ENCODE measurements at regions of chr5 and their contacts with region 1.

Region 1: DNA sequence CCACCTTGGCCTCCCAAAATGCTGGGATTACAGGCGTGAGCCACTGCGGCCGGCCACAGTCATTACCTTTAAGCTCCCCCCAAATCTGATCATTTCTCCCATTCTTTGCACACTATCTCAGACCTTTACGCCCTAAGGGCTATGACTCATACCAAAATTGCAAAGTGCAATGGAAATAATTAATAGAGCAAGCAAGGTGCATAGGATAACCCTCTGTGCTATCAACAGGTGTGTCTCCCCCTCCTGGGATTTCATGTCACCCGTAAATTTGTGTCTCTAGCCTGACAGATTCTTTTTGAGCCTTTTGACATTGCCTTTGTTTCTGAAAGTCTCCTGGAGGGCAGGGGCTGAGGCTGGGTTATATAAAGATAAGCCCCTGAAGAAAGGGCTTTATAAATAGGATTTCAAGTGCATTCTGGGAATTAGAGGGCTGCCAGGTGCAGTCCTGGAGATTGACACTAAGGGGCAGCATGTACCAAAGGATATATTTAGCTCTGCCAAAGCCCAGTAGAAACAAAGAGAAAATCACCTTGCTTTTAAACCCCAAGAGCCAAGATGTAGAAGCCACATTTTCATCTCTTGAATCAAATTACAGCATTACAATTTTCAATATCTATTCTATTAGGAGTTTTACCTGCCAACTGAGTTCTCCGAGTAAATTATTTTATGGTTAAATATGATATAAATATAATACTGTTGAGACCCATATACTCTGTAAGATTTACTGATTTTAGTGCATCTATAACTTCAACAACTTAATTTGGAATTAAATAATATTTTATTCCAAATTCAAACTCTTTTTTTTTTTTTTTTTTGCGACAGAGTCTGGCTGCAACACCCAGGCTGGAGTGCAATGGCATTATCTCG is 18.2 kb downstream of the S100Z start:
- DNase-seq: peak; percentile 43 to 75
- ATAC-seq: peak; percentile 74 to 93 (median 84)
- H3K4me3 ChIP-seq: no peak overlapping the region
- H3K27ac ChIP-seq: peak overlapping the region in 4 of 10 donors; percentile 23 to 60 (median 46)
- H3K4me1 ChIP-seq: peaks cover 0 to 9% (median 0%) of the 10 kb centered on the region in 9 donors
- H3K27me3 ChIP-seq: no peaks in the 10 kb centered on the region
- CTCF ChIP-seq: peak; percentile 55 to 92 (median 84)

Region 2: GRCh38 chr5:76893294-76893693 is 25.2 kb after region 1 on chr5:
- intact Hi-C with region 1: no loop called
- DNase-seq: no peak
- ATAC-seq: no peak
- H3K4me3 ChIP-seq: no peak overlapping the region
- H3K27ac ChIP-seq: no peak overlapping the region
- H3K4me1 ChIP-seq: no peaks in the 10 kb centered on the region
- H3K27me3 ChIP-seq: peaks cover 0 to 3% (median 0%) of the 10 kb centered on the region in 7 donors
- CTCF ChIP-seq: no peak

Region 3: DNA sequence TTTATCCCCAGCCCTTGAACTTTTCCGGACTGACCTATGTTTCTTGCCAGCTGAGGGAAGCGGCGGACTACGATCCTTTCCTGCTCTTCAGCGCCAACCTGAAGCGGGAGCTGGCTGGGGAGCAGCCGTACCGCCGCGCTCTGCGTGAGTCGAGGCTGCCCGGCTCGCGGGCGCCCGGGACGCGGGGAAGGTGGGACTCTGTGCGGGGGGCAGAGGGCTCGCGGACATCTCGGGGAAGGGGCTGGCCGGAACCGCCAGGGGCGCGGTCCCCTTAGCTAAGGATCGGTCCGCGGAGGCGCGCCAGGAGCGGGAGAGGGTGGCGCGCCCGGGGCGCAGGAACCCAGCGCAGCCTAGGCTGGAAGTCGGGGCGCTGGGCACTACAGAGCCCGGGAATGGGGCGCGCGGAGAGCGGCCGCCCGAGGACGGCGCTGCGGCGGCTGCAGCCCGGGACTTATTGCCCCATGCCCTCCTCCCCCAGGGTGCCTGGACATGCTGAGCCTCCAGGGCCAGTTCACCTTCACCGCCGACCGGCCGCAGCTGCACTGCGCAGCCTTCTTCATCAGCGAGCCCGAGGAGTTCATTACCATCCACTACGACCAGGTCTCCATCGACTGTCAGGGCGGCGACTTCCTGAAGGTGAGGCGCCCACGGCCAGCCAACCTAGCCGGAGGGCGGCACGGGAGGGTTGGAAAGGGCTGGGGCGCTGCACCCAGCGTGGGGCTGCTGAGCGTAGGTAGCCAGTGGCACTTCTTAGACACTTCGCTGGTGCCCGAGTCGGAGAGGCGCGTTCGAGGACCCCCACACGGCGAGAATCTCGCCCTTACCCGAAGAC is 85.7 kb after region 1 on chr5:
- intact Hi-C with region 1: loop called in 1 of 10 experiments (anchors 5 kb)
- DNase-seq: peak in 1 of 2 donors; percentile 12
- ATAC-seq: peak; percentile 46 to 78 (median 49)
- H3K4me3 ChIP-seq: peak overlapping the region; percentile 44 to 69 (median 57)
- H3K27ac ChIP-seq: peak overlapping the region in 4 of 10 donors; percentile 14 to 73 (median 64)
- H3K4me1 ChIP-seq: peaks cover 0 to 30% (median 15%) of the 10 kb centered on the region in 9 donors
- H3K27me3 ChIP-seq: peaks cover 0 to 48% (median 30%) of the 10 kb centered on the region in 7 donors
- CTCF ChIP-seq: no peak

Region 4: GRCh38 chr5:76971516-76971915 is 103.5 kb after region 1 on chr5:
- intact Hi-C with region 1: no loop called
- DNase-seq: no peak
- ATAC-seq: no peak
- H3K4me3 ChIP-seq: no peak overlapping the region
- H3K27ac ChIP-seq: no peak overlapping the region
- H3K4me1 ChIP-seq: no peaks in the 10 kb centered on the region
- H3K27me3 ChIP-seq: no peaks in the 10 kb centered on the region
- CTCF ChIP-seq: no peak

Region 5: GRCh38 chr5:77015938-77016569 is 148.0 kb after region 1 on chr5:
- intact Hi-C with region 1: loop called (anchors 1 to 10 kb)
- DNase-seq: peak in 1 of 2 donors; percentile 7
- ATAC-seq: peak in 5 of 8 donors; percentile 20 to 48 (median 23)
- H3K4me3 ChIP-seq: no peak overlapping the region
- H3K27ac ChIP-seq: no peak overlapping the region
- H3K4me1 ChIP-seq: no peaks in the 10 kb centered on the region
- H3K27me3 ChIP-seq: peaks cover 0 to 6% (median 0%) of the 10 kb centered on the region in 7 donors
- CTCF ChIP-seq: peak in 7 of 9 donors; percentile 43 to 64 (median 50)

Region 6: DNA sequence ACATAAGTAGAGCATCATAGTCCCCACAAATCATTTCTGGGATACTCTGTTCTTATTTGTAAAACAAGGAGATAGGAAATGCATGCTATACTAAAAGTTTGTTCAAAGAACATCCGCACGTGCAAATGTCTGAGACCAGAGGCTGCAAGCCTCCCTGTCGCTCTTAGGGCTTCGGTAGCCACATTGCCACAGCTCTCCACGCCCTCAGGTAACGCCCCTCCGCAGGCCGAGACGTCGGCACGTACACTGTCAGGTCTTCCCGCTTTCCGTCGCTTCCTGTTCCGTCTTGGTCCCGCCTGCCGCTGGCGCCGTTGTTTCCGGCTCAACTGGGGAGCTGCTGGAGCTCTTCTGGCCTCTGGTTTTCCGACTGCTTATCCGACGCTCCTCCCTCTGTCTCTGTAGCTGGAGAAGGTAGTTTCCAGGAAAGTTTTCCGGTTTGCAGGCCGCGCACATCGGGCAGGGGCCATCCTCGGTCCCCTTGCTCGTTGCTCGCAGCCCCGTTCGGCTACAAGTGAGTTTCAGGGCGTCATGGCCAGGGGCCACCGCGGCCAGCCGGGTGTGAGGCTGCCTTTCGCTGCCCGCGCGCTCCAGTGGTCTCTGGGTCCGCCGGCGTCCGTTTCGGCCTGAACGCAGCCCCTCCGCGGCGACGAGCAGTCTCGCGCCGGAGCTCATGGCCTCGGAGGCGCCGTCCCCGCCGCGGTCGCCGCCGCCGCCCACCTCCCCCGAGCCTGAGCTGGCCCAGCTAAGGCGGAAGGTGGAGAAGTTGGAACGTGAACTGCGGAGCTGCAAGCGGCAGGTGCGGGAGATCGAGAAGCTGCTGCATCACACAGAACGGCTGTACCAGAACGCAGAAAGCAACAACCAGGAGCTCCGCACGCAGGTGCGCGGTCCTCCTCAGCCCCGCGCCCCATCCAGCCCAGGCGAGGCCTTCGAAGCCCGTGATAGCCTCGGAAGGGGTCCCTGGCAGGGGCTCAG is 162.3 kb after region 1 on chr5 and contains the start of gene AGGF1:
- intact Hi-C with region 1: loop called in 2 of 10 experiments (anchors 5 to 10 kb)
- DNase-seq: peak; percentile 92 to 95
- ATAC-seq: peak; percentile 100
- H3K4me3 ChIP-seq: peak within 1 kb of the TSS; percentile 50 to 99 (median 85)
- H3K27ac ChIP-seq: peak within 1 kb of the TSS; percentile 57 to 98 (median 92)
- H3K4me1 ChIP-seq: peaks cover 0 to 31% (median 19%) of the 10 kb centered on the region in 9 donors
- H3K27me3 ChIP-seq: no peaks in the 10 kb centered on the region
- CTCF ChIP-seq: no peak
- total RNA-seq, gene AGGF1: 12.6 to 20.6 (median 16.2) TPM

Region 7: DNA sequence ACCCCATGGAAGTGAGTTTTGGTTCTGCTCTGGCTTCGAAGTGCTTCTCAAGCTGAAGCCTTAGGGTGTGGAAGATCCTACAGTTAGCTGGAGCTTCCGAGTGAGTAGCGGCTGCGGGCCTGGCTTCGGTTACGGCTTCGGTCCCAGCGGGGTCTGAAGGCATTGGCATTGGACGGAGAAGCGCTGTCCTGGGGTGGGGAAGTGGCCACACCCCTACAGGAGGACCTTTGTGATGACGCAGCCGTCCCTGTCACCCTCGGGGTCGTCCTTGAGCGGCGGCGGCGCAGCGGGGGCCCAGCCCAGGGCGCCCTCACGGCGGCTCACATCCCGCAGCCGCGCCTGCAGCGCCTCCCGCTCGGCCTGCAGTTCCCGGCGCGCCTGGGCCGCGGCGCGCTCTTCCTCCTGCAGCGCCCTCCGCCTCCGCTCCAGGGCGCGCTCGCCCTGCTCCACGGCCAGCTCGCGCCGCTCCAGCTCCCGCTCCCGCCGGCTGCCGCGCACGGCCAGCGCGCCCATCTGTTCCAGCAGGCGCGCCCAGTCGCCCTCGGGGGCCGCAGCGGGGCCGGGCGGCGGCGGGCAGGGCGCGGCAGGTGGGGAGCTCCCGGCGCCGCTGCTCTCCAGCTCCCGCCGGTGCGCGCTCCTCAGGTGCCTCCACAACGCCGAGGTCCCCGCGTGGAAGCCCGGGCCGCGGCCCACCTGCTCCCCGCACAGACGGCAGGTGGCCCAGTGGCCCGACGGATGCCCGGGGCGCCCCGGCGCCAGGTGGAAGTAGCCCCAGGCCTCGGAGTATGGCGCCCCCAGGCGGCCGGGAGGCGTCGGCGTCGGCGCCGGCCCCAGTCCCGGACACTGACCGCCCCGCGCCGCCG is 209.1 kb after region 1 on chr5:
- intact Hi-C with region 1: loop called in 6 of 10 experiments (anchors 5 to 10 kb)
- DNase-seq: peak; percentile 67 to 80
- ATAC-seq: peak; percentile 85 to 92 (median 89)
- H3K4me3 ChIP-seq: peak overlapping the region in 9 of 10 donors; percentile 40 to 60 (median 56)
- H3K27ac ChIP-seq: peak overlapping the region in 9 of 10 donors; percentile 40 to 80 (median 62)
- H3K4me1 ChIP-seq: peaks cover 0 to 13% (median 7%) of the 10 kb centered on the region in 9 donors
- H3K27me3 ChIP-seq: no peaks in the 10 kb centered on the region
- CTCF ChIP-seq: peak; percentile 48 to 83 (median 75)

Region 8: DNA sequence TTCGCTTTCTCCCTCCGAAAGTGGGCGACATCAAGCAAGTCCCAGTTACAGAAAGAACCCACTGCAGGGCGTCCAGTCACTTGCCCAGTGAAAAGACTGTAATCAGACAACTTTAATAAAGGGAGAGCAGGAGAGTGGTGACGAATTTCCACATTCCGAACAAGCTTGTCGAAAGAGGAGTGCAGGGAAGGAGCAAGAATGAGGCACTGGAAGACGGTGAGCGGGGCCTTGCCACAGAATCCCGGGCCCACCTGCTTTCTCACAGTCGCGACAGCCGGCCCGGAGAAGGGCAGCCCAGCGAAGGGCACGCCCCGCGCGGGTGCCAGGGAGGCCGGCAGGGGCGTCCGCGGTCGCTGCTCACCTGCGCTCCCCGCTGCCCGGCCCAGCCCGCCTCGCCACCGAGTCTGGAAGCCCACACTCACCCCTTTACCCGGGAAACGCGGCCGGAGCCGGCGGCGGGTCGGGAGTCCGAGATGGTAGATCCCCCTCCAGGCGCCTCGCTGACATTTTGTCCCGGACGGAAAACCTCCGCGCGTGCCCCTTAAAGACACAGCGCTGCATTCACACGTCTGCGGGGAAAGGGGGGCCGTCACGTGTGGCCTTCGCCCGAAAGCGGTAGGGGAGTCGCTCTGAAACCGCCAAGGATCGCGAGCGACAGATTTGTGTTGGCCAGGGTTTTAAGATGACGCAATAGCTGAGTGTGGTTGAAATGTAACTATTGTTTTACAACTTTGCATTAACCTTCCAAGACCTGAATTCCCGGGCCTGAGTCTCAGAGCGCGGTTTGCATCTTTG is 218.8 kb after region 1 on chr5 and contains the start of gene ZBED3:
- intact Hi-C with region 1: loop called in 1 of 10 experiments (anchors 10 kb)
- DNase-seq: peak; percentile 63 to 64
- ATAC-seq: peak; percentile 76 to 88 (median 81)
- H3K4me3 ChIP-seq: peak within 1 kb of the TSS; percentile 66 to 98 (median 82)
- H3K27ac ChIP-seq: peak within 1 kb of the TSS; percentile 86 to 98 (median 90)
- H3K4me1 ChIP-seq: peaks cover 2 to 21% (median 16%) of the 10 kb centered on the region in 9 donors
- H3K27me3 ChIP-seq: no peaks in the 10 kb centered on the region
- CTCF ChIP-seq: peak in 5 of 9 donors; percentile 5 to 30 (median 21)
- total RNA-seq, gene ZBED3: 4.8 to 8.9 (median 6.5) TPM

Region 9: DNA sequence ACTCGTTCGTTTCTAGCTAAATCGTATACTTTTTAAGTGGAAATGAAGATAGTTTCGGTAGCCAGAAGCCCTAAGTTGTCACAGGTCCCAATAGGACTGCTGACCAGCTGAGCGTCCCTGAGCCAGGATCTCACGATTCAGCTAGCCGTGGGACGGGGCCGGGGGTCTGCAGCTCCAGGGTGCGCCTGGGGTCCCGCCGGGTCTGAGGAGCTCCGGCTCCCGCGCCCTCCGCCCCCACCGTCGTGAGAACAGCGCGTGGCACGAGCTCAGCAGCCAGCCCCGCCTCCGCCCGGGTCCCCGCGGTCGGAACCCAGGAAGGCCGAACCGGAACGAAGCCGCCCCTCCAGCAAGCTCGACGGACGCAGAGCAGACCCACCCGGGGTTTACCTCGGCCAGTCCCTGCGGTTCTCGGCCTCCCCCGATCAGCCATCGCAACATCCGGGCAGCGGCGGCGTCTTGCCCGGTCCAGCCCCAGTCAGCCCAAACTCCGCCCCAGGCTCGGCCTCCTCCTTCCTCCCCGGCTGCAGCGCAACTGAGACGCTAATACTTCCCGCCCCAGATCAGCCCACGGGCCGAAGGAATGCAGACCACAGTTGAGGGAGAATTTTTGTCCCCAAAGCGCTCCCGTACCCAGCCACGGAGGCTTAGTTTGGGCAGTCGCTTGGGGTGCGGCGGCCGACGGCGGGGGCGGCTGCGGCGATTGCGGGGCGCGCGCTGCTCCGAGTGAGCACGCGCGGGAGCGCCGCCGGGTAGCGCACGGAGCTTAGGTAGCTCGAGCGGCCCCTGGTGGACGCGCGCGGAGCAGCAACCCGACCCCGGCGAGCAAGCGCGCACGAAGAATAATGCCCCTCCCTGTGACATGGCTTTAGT is 624.0 kb after region 1 on chr5 and contains the start of gene WDR41:
- intact Hi-C with region 1: loop called in 5 of 10 experiments (anchors 5 to 10 kb)
- DNase-seq: peak; percentile 92 to 95
- ATAC-seq: peak; percentile 97 to 98 (median 98)
- H3K4me3 ChIP-seq: peak within 1 kb of the TSS; percentile 57 to 90 (median 78)
- H3K27ac ChIP-seq: peak within 1 kb of the TSS; percentile 82 to 98 (median 95)
- H3K4me1 ChIP-seq: peaks cover 0 to 17% (median 9%) of the 10 kb centered on the region in 9 donors
- H3K27me3 ChIP-seq: peaks cover 0 to 5% (median 0%) of the 10 kb centered on the region in 7 donors
- CTCF ChIP-seq: peak; percentile 92 to 99 (median 95)
- total RNA-seq, gene WDR41: 21.4 to 44.9 (median 34.6) TPM